ENCODE measurements at regions of chr13 and their contacts with region 1.

Region 1: DNA sequence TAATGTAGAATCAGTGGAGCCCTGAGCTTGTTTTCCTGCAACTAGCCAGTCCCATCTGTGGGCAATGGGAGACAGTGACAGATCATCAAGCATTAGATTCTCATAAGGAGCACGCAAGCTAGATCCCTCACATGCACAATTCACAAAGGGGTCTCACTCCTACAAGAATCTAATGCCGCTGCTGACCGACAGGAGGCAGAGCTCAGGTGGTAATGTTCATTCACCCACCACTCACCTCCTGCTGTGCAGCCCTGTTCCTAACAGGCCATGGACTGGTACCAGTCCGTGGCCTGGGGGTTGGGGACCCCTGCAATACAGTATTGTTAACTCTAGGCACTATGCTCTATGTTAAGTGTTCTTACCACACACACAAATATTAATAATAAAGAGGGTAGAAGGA is 362.8 kb downstream of the RBM26 start:
- DNase-seq: no peak
- H3K4me3 ChIP-seq: no peak overlapping the region
- H3K27ac ChIP-seq: no peak overlapping the region
- H3K4me1 ChIP-seq: no peaks in the 10 kb centered on the region
- H3K27me3 ChIP-seq: no peaks in the 10 kb centered on the region
- CTCF ChIP-seq: no peak
- POLR2A ChIP-seq: no peak

Region 2: DNA sequence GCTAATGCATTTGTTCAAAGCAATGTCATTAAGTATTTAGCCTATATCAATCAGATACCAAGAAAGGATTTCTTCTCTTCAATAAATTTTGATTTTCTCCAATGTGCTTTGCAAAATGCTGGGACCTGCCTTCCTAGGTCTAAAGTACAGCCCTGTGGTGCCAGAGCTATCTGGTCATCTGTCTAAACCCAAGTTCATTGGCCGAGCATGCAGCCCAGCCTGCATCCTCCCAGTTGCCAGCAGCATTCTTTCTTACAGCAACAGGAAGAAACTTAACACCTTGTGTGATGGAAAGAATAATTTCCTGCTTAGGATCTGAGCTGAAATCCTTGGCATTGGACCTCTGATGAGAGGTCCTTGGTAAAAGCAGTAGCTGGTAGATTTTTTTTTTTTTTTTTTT is 52.9 kb after region 1 on chr13:
- intact Hi-C with region 1: loop called in 1 of 2 experiments (anchors 5 kb)
- DNase-seq: no peak
- H3K4me3 ChIP-seq: no peak overlapping the region
- H3K27ac ChIP-seq: no peak overlapping the region
- H3K4me1 ChIP-seq: no peaks in the 10 kb centered on the region
- H3K27me3 ChIP-seq: no peaks in the 10 kb centered on the region
- CTCF ChIP-seq: no peak
- POLR2A ChIP-seq: no peak